Mammary epithelial cell (primary cell): ENCODE measurements at regions of chr16 and their contacts with region 1.

Region 1: DNA sequence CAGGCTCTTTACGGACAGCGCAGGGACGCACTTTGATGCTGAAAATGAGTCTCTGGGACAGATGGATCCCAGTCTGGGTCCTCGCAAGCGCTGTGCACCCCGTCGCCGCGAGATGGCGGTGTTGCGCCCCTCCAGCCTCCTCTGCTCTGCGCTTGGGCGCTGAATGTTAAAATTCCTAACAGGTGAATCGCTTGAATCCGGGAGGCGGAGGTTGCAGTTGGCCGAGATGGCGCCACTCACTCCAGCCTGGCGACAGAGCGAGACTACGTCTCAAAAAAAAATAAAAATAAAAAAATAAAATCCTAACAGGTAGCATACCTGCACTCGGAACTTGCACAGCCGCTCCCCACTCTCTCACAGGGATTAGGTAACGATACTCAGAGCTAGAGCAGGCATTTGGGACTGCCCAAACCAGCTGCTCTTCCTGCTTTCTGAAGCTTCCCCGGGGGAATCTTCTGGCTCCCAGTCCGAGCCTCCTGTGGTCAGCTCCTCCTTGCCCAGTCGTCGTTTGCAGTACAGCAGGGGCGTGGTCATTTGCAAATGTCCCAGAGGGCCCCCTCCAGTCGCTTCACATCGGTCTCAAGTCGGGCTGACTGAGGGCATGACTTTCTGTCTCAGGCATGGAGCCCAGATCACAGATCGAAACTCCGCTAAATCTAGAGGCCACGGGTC is 26.2 kb upstream of the OSGIN1 start:
- DNase-seq: peak; percentile 81
- H3K4me3 ChIP-seq: peak overlapping the region; percentile 15 to 44 (median 43)
- H3K27ac ChIP-seq: peak overlapping the region; percentile 51
- H3K4me1 ChIP-seq: peaks cover 26% of the 10 kb centered on the region
- H3K27me3 ChIP-seq: no peaks in the 10 kb centered on the region
- CTCF ChIP-seq: peak; percentile 83 to 98

Region 2: DNA sequence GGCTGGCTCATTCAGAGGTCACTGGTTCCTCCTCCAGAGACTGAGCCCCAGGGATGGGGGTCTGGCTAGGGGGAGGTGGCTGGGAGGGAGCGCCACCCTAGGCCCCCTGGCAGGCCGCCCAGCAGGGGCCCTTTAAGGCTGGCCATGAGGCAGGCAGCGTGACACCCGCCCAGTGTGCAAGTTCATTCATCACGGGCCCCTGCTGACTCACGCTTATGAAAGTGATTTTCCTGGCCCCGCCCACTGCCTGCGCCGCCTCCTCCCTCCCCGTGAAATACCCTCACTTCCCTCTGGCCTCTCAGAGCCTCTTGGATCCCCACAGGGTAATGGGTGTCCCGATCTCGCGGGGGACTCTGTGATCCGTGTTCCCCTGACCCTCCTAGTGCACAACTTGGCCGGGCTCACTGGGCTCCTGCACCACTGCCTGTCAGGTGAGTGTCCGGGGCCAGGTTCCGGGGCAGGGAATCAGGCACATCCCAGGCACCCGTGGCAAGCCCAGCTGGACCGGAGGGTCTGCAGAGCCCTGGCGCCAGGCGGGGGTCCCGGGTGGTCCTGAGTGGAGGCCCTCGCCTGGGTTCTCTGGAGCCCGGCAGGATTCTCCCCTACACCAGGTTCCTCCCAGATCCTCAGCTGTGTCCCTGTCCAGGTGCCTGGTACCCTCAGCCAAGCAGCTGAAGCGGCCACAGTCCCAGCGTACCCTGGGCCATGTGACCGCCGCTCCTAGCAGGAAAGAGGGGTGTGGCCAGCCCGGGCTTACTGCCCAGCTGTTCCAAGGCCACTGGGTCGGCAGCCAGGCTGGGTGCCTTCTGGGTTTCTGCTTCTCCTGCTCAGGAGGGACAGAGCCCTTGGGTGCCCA is 26.3 kb after region 1 on chr16 and contains the start of gene OSGIN1:
- CTCF ChIA-PET with region 1: interaction called, 5 read pairs
- dilution Hi-C with region 1: no loop called
- in situ Hi-C with region 1: no loop called
- intact Hi-C with region 1: loop called (anchors 1 kb)
- DNase-seq: peak; percentile 92
- H3K4me3 ChIP-seq: peak within 1 kb of the TSS; percentile 65 to 76 (median 66)
- H3K27ac ChIP-seq: peak within 1 kb of the TSS; percentile 82
- H3K4me1 ChIP-seq: peaks cover 21% of the 10 kb centered on the region
- H3K27me3 ChIP-seq: no peaks in the 10 kb centered on the region
- CTCF ChIP-seq: no peak
- total RNA-seq, gene OSGIN1: 3.3 to 9.3 TPM

Region 3: GRCh38 chr16:83967806-83968305 is 41.0 kb after region 1 on chr16 and contains the start of gene NECAB2:
- CTCF ChIA-PET with region 1: no interaction called
- dilution Hi-C with region 1: no loop called
- in situ Hi-C with region 1: no loop called
- intact Hi-C with region 1: loop called (anchors 5 kb)
- DNase-seq: no peak
- H3K4me3 ChIP-seq: peak within 1 kb of the TSS in 2 of 3 experiments; percentile 6 to 34
- H3K27ac ChIP-seq: no peak within 1 kb of the TSS
- H3K4me1 ChIP-seq: no peaks in the 10 kb centered on the region
- H3K27me3 ChIP-seq: peaks cover 6% of the 10 kb centered on the region
- CTCF ChIP-seq: peak; percentile 20 to 60
- total RNA-seq, gene NECAB2: 0.87 TPM in 1 of 2 donors, not detected in the other